T-cell (primary cell): ENCODE measurements at regions of chr20 and their contacts with region 1.

Region 1: DNA sequence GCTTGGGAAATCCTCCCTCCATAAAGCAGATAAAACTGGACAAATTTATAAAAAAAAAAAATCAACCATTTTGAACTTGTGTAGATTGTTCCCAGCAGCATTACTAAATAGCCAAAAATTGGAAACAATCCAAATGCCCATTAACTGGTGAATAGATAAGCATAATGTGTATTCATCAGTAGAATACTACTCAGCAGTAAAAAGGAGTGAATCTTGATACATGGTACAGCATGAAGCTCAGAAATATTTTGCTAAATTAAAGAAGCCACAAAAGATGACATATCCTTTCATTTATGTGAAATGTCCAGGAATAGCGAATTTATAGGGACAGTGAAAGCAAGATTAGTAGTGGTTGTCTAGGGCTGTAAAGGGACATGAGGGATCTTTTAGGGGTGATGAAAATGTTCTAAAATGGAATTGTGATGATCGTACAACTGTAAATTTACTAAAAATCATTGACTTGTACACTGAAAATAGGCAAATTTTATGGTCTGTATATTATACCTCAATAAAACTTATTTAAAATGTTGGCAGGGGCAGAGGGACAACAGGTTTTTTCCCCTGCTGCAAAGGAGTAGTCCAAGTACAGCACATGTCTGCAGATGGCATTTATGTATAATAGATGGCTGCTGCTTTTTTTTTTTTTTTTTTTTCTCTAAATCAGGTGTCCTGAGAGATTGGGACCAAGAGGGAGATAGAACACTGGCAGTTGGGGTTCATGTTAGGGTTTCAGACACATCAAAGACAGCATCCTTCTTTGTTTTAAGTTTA is 59.5 kb downstream of the CBFA2T2 start:
- DNase-seq: no peak
- ATAC-seq: no peak
- H3K4me3 ChIP-seq: no peak overlapping the region
- H3K4me3 Mint-ChIP-seq: no peak overlapping the region
- H3K27ac ChIP-seq: no peak overlapping the region
- H3K27ac Mint-ChIP-seq: no peak overlapping the region
- H3K4me1 ChIP-seq: peaks cover 6 to 10% of the 10 kb centered on the region in 2 experiments
- H3K4me1 Mint-ChIP-seq: peaks cover 21 to 25% (median 24%) of the 10 kb centered on the region in 3 donors
- H3K27me3 ChIP-seq: no peaks in the 10 kb centered on the region
- H3K27me3 Mint-ChIP-seq: no peaks in the 10 kb centered on the region

Region 2: GRCh38 chr20:33499355-33499754 is 50.1 kb before region 1 on chr20:
- CTCF ChIA-PET with region 1: interaction called in 1 of 2 experiments, 12 read pairs
- POLR2A ChIA-PET with region 1: interaction called in 1 of 2 experiments, 8 read pairs
- DNase-seq: no peak
- ATAC-seq: no peak
- H3K4me3 ChIP-seq: no peak overlapping the region
- H3K4me3 Mint-ChIP-seq: no peak overlapping the region
- H3K27ac ChIP-seq: no peak overlapping the region
- H3K27ac Mint-ChIP-seq: no peak overlapping the region
- H3K4me1 ChIP-seq: no peaks in the 10 kb centered on the region
- H3K4me1 Mint-ChIP-seq: peaks cover 38 to 39% (median 39%) of the 10 kb centered on the region in 3 donors
- H3K27me3 ChIP-seq: no peaks in the 10 kb centered on the region
- H3K27me3 Mint-ChIP-seq: no peaks in the 10 kb centered on the region